ENCODE measurements at regions of chr6 and their contacts with region 1.

Region 1: DNA sequence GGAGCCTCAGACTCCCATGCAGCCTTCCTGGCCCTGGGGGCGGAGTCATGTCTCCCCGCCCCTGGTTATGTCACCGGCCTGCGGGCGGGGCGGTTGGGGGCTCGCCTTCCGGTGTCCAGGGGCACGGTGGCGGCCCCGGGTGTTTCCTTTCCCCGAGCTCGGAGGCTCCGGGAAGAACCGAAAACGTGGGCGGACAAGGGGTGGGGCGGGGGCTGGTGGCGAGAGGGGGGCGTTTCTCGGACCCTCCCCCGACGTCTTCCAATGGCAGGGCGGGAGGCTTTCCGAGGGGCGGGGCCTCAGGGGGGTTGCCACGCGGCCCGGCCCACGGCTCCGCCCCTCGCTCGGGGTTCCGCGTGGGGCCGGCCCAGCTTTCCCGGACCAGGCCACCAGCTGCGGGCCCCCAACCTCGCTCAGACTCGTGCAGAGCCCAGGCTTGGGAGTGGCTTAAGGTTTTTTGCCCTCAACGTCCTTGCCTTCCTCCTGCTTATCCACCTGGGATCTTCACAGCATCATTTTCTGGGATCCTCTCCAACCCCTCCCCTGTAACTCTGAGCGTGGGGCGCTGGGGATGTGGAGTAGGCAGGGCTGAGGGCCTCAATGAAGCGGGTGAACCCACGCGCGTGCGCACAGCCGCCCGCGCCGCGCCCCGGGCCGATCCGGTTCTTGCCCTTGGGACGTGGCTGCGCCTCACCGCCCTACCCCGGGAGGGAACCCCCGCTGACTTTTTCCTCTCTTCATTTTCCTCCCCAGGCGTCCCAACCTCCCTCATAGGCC is 2.1 kb upstream of the NRN1 start:
- DNase-seq: peak; percentile 83
- ATAC-seq: peak; percentile 68
- H3K4me3 Mint-ChIP-seq: peak overlapping the region; percentile 78
- H3K27ac Mint-ChIP-seq: no peak overlapping the region
- H3K4me1 Mint-ChIP-seq: peaks cover 35% of the 10 kb centered on the region
- H3K27me3 Mint-ChIP-seq: peaks cover 72% of the 10 kb centered on the region
- CTCF ChIP-seq: no peak

Region 2: GRCh38 chr6:5778317-5778857 is 230.4 kb before region 1 on chr6:
- CTCF ChIA-PET with region 1: no interaction called
- POLR2A ChIA-PET with region 1: no interaction called
- DNase-seq: no peak
- ATAC-seq: no peak
- H3K4me3 Mint-ChIP-seq: no peak overlapping the region
- H3K27ac Mint-ChIP-seq: no peak overlapping the region
- H3K4me1 Mint-ChIP-seq: peaks cover 16% of the 10 kb centered on the region
- H3K27me3 Mint-ChIP-seq: no peaks in the 10 kb centered on the region; the same call in 1 of the 2 replicates
- CTCF ChIP-seq: no peak

Region 3: GRCh38 chr6:5898102-5898501 is 110.7 kb before region 1 on chr6:
- CTCF ChIA-PET with region 1: no interaction called
- POLR2A ChIA-PET with region 1: no interaction called
- DNase-seq: no peak
- ATAC-seq: no peak
- H3K4me3 Mint-ChIP-seq: no peak overlapping the region
- H3K27ac Mint-ChIP-seq: no peak overlapping the region
- H3K4me1 Mint-ChIP-seq: no peaks in the 10 kb centered on the region
- H3K27me3 Mint-ChIP-seq: peaks cover 5% of the 10 kb centered on the region
- CTCF ChIP-seq: no peak

Region 4: GRCh38 chr6:5995949-5996713 is 12.7 kb before region 1 on chr6:
- CTCF ChIA-PET with region 1: interaction called, 21 read pairs
- POLR2A ChIA-PET with region 1: interaction called, 4 read pairs
- DNase-seq: peak; percentile 89
- ATAC-seq: peak; percentile 82
- H3K4me3 Mint-ChIP-seq: peak overlapping the region; percentile 82
- H3K27ac Mint-ChIP-seq: no peak overlapping the region; the same call in 1 of the 2 replicates
- H3K4me1 Mint-ChIP-seq: peaks cover 73% of the 10 kb centered on the region
- H3K27me3 Mint-ChIP-seq: peaks cover 100% of the 10 kb centered on the region
- CTCF ChIP-seq: 0 out of 2 replicates have a peak, but pooled peaks have one; percentile 22

Measured in WTC11 (cell line).